Calu3 (cell line): ENCODE measurements at regions of chr4 and their contacts with region 1.

Region 1: DNA sequence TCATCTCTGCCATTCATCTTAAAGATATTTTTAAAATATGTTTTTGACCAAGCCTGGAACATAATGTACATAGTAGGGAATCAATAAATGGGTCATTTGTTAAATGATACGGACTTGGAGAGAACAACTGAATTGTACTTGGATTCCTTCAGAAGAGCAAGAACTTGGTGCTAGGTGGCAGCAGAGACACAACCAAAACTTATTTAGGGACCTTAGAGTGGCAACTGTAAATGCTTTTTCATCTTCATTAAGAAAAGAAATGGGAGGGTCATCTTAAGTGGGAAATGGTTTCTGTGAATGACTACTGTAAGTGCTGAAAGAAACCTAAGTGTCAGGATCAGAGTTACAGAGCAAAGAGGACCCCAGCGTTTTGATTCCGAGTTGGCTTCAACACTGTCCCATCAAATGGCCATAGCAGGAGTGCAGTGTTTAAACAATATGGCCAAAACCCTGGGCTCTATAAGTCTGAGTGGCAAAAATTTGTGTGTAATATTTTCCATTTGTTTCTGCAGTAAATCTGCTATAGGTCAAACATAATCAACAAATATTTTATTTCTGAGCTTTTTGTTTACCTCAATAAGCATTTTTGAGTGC is 213.6 kb downstream of the PALLD start:
- DNase-seq: peak; percentile 17
- H3K4me3 Mint-ChIP-seq: no peak overlapping the region
- H3K27ac Mint-ChIP-seq: no peak overlapping the region
- H3K4me1 Mint-ChIP-seq: no peaks in the 10 kb centered on the region
- H3K27me3 Mint-ChIP-seq: no peaks in the 10 kb centered on the region
- CTCF ChIP-seq: no peak

Region 2: GRCh38 chr4:168784786-168785461 is 74.5 kb after region 1 on chr4:
- CTCF ChIA-PET with region 1: no interaction called
- intact Hi-C with region 1: loop called (anchors 10 kb)
- DNase-seq: peak; percentile 71
- H3K4me3 Mint-ChIP-seq: peak overlapping the region; percentile 13
- H3K27ac Mint-ChIP-seq: peak overlapping the region; percentile 90
- H3K4me1 Mint-ChIP-seq: peaks cover 29% of the 10 kb centered on the region
- H3K27me3 Mint-ChIP-seq: no peaks in the 10 kb centered on the region
- CTCF ChIP-seq: no peak

Region 3: GRCh38 chr4:168847771-168848511 is 137.5 kb after region 1 on chr4:
- CTCF ChIA-PET with region 1: no interaction called
- intact Hi-C with region 1: loop called (anchors 10 kb)
- DNase-seq: no peak
- H3K4me3 Mint-ChIP-seq: peak overlapping the region; percentile 47
- H3K27ac Mint-ChIP-seq: peak overlapping the region; percentile 17
- H3K4me1 Mint-ChIP-seq: peaks cover 16% of the 10 kb centered on the region
- H3K27me3 Mint-ChIP-seq: no peaks in the 10 kb centered on the region
- CTCF ChIP-seq: no peak

Region 4: DNA sequence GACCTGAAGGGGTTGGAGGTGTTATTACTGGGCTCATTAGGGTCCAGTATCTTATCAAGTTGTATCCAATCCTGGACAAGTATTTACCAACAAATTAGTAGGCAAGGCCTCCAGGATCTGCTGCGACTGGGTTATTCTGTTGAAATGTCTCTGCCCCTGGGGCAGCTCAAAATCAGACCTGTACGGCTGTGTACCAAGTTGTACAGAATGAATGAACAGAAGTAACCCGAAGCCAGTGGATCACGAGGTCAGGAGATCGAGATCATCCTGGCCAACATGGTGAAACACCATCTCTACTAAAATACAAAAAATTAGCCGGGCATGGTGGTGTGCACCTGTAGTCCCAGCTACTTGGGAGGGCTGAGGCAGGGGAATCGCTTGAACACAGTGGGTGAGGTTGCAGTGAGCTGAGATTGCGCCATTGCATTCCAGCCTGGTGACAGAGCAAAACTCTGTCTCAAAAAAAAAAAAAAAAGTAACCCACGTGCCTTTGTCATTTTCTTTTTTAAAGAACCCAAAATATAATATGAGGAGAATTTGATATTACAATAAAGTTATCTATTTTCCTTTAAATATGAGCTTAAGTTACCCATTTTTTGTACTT is 172.3 kb after region 1 on chr4:
- CTCF ChIA-PET with region 1: no interaction called
- intact Hi-C with region 1: no loop called
- DNase-seq: no peak
- H3K4me3 Mint-ChIP-seq: no peak overlapping the region
- H3K27ac Mint-ChIP-seq: no peak overlapping the region
- H3K4me1 Mint-ChIP-seq: peaks cover 12% of the 10 kb centered on the region
- H3K27me3 Mint-ChIP-seq: no peaks in the 10 kb centered on the region
- CTCF ChIP-seq: no peak

Region 5: GRCh38 chr4:168917138-168917779 is 206.8 kb after region 1 on chr4:
- CTCF ChIA-PET with region 1: interaction called, 5 read pairs
- intact Hi-C with region 1: loop called (anchors 1 kb)
- DNase-seq: no peak
- H3K4me3 Mint-ChIP-seq: no peak overlapping the region
- H3K27ac Mint-ChIP-seq: no peak overlapping the region
- H3K4me1 Mint-ChIP-seq: no peaks in the 10 kb centered on the region
- H3K27me3 Mint-ChIP-seq: no peaks in the 10 kb centered on the region
- CTCF ChIP-seq: no peak